Activated CD4-positive, alpha-beta memory T cell treated with anti-CD3 and anti-CD28 coated beads, Interleukin-2, amount 10 ng/mL, durations not matched to agents 7 days and 5 days (primary cell): ENCODE measurements at regions of chr11 and their contacts with region 1.

Region 1: GRCh38 chr11:59106363-59107336 is at the start of gene FAM111B:
- DNase-seq: peak; percentile 84
- H3K4me3 Mint-ChIP-seq: peak within 1 kb of the TSS; percentile 86
- H3K27ac Mint-ChIP-seq: peak within 1 kb of the TSS; percentile 72
- H3K4me1 Mint-ChIP-seq: peaks cover 77% of the 10 kb centered on the region
- H3K27me3 Mint-ChIP-seq: no peaks in the 10 kb centered on the region
- total RNA-seq, gene FAM111B: 47.2 to 48.6 TPM

Region 2: DNA sequence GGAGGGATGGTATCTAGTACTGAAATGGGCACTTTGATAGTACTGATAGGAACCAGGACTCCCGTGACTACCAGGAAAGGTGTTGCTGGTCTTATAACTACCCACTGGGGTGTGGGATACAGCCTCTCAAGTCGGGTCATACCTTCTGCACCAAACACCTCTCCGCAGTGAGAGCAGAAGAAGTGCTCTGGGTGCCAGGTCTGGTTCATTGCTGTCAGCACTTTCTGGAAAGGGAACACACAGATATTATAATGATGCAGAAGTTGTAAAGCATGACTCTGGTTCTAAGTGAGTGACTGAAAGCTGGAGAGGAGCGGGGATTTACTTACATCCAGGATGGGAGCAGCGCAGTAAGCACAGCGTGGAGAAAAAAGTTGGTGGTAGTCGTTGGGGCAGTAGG is 557.0 kb before region 1 on chr11:
- CTCF ChIA-PET with region 1: no interaction called
- POLR2A ChIA-PET with region 1: no interaction called
- DNase-seq: no peak
- H3K4me3 Mint-ChIP-seq: no peak overlapping the region
- H3K27ac Mint-ChIP-seq: no peak overlapping the region
- H3K4me1 Mint-ChIP-seq: peaks cover 2% of the 10 kb centered on the region
- H3K27me3 Mint-ChIP-seq: no peaks in the 10 kb centered on the region

Region 3: GRCh38 chr11:59053387-59053786 is 53.3 kb before region 1 on chr11:
- CTCF ChIA-PET with region 1: interaction called, 11 read pairs
- POLR2A ChIA-PET with region 1: no interaction called
- DNase-seq: peak; percentile 81
- H3K4me3 Mint-ChIP-seq: no peak overlapping the region
- H3K27ac Mint-ChIP-seq: no peak overlapping the region
- H3K4me1 Mint-ChIP-seq: peaks cover 3% of the 10 kb centered on the region
- H3K27me3 Mint-ChIP-seq: peaks cover 30% of the 10 kb centered on the region

Region 4: GRCh38 chr11:59135648-59136461 is 29.2 kb after region 1 on chr11:
- CTCF ChIA-PET with region 1: interaction called, 39 read pairs
- POLR2A ChIA-PET with region 1: interaction called, 169 read pairs
- DNase-seq: peak; percentile 90
- H3K4me3 Mint-ChIP-seq: peak overlapping the region; percentile 28
- H3K27ac Mint-ChIP-seq: peak overlapping the region; percentile 33
- H3K4me1 Mint-ChIP-seq: peaks cover 30% of the 10 kb centered on the region
- H3K27me3 Mint-ChIP-seq: no peaks in the 10 kb centered on the region

Region 5: DNA sequence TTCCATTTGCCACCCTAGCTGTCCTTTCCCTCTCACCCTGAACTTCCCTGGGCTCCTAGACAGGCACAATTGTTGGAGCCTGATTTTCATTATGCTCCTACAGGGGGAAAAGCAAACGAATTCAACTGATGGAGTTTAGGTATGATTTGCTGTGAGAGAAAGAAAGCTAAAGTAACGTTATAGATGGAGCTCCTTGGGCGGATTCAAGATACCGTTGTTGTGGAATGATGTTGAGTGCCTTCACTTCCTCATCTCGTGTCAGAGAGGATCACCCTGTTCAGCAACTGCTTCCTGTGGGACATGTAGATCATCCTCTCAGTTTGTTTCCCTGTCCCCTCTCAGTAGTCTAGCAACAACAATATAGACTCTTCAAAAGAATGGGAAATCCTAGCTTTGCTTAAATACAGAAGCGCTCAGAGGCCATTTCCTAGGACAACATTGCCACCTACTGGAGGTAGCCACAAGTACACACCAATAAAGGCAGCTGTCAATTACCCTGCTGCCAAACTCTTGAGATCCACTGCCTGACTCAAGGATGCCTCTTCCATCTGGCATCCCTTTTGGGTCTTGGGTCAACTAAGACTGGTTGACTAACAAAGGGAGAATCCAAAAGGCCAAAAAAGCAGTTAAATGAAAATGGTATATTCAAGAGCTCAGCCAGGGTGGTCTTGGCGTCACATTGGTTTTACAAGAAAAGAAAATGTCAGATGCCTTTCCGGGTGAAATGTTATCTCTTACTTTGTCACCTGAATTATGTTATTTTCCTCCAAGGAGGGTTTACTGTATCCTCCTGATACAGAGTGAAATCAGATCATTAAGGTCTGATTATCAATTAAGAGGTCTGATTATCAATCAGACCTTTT is 51.8 kb after region 1 on chr11:
- CTCF ChIA-PET with region 1: interaction called, 18 read pairs
- POLR2A ChIA-PET with region 1: interaction called, 9 read pairs
- DNase-seq: peak; percentile 69
- H3K4me3 Mint-ChIP-seq: no peak overlapping the region
- H3K27ac Mint-ChIP-seq: no peak overlapping the region
- H3K4me1 Mint-ChIP-seq: peaks cover 10% of the 10 kb centered on the region
- H3K27me3 Mint-ChIP-seq: peaks cover 7% of the 10 kb centered on the region